Activated T-helper 1 cell treated with anti-CD3 and anti-CD28 coated beads, Interleukin-12 subunit alpha, Interleukin-12 subunit beta, Interleukin-2, Interleukin-4 antibody, amounts not matched to agents 30 ng/mL and 10 ng/mL and 1 ng/mL, durations not matched to agents 14 hours and 24 hours and 36 hours (primary cell): ENCODE measurements at regions of chr19 and their contacts with region 1.

Region 1: GRCh38 chr19:57435062-57435978 is at the start of gene ZNF749:
- DNase-seq: peak; percentile 95
- H3K4me3 Mint-ChIP-seq: peak within 1 kb of the TSS; percentile 93
- H3K27ac Mint-ChIP-seq: peak within 1 kb of the TSS; percentile 95
- H3K4me1 Mint-ChIP-seq: peaks cover 23% of the 10 kb centered on the region
- H3K27me3 Mint-ChIP-seq: no peaks in the 10 kb centered on the region
- total RNA-seq, gene ZNF749: 21.5 and 22.0 TPM in 2 replicates

Region 2: GRCh38 chr19:57096685-57097361 is 338.5 kb before region 1 on chr19:
- intact Hi-C with region 1: no loop called
- DNase-seq: no peak
- H3K4me3 Mint-ChIP-seq: no peak overlapping the region
- H3K27ac Mint-ChIP-seq: no peak overlapping the region
- H3K4me1 Mint-ChIP-seq: no peaks in the 10 kb centered on the region
- H3K27me3 Mint-ChIP-seq: no peaks in the 10 kb centered on the region

Region 3: DNA sequence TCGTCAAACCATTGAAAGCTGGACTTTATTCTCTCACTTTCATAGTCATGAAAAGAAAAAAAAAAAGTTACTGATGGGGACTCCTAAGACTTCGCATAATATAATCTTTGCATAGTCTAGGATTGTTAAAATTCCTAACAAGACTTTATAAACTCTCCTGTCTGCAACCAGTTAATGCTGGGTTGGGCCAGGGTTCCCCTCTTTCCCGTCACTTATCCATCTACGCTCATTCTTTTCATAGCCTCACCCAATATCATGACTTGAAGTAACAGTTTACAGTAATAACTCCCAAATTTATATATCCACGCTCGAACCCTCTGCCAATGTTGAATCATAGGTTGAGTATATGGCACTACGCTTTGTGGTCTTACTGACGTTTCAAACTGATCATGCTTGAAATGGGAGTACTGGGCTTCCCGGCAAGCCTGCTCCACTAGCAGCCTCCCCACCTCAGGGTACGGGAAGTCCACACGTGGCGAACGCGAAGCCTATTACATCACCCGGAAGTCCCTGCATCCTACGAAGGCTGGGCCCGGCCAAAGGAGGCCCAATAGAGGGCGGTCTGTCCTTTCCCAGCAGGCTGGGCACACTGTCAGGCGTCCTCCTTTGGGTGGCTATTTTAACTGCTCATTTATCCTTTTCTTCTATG is 155.8 kb before region 1 on chr19:
- intact Hi-C with region 1: loop called (anchors 1 kb)
- DNase-seq: peak; percentile 75
- H3K4me3 Mint-ChIP-seq: no peak overlapping the region
- H3K27ac Mint-ChIP-seq: no peak overlapping the region
- H3K4me1 Mint-ChIP-seq: peaks cover 23% of the 10 kb centered on the region
- H3K27me3 Mint-ChIP-seq: peaks cover 2% of the 10 kb centered on the region

Region 4: DNA sequence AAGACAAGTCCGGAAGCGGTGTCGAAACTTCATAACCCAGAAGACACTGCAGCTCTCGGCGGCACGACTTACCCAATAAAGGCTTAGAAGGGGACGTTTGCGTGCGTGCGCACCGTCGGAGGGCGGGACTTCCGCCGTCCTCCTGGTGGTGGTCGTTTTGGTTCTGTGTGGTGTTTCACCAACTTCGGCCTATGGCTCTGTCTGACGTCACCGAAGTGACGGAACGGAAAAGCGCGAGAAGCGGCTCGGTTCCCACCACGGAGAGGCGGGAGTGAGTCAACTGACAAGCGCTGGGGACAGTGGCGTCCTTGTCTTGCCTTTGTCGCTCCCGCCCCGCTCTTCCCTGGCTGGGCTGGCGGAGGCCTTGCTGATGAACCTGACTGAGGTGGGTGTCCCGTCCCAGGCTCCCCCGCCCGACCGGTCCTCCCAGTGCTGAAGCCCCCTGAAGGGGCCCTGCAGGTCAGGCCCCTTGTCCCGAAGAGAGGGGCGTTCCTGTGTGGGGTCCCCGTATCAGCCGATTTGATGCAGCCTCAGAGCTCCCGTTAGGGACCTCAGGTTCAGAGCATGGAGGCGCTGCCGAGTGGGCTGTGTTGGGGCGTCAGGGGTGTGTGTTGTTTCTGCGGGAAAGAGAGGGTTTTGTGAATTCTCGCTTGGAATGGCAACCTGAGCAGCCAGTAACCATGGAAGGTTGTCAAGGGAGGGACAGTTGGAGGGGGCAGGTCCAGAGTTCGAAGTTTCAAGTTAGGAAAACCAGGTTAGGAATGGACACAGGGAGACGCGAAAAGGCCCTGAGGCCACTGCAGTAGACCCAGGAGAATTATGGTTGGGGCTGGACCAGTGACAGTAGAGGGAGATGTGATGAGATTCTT is 45.4 kb before region 1 on chr19 and contains the start of gene ZNF548:
- intact Hi-C with region 1: loop called (anchors 1 kb)
- DNase-seq: peak; percentile 92
- H3K4me3 Mint-ChIP-seq: peak within 1 kb of the TSS; percentile 94
- H3K27ac Mint-ChIP-seq: peak within 1 kb of the TSS; percentile 94
- H3K4me1 Mint-ChIP-seq: peaks cover 30% of the 10 kb centered on the region
- H3K27me3 Mint-ChIP-seq: no peaks in the 10 kb centered on the region
- total RNA-seq, gene ZNF548: 11.3 and 12.1 TPM in 2 replicates

Region 5: DNA sequence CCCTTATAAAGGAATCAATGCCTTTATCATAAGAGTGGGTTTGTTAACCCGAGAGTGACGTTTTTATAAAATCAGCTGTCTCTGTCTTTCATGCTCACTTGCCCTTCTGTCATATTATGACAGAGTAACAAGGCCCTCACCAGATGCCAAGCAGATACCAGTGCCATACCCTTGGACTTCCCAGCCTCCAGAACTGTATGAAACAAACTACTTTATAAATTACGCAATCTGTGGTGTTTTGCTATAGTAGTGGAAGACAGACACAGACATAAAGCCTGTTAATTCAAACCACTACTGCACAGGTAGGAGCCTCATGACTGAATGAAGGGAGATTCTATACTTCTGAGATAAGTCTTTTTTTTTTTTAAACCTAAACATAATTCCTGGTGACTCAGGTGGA is 17.0 kb after region 1 on chr19:
- intact Hi-C with region 1: no loop called
- DNase-seq: no peak
- H3K4me3 Mint-ChIP-seq: no peak overlapping the region
- H3K27ac Mint-ChIP-seq: no peak overlapping the region
- H3K4me1 Mint-ChIP-seq: no peaks in the 10 kb centered on the region
- H3K27me3 Mint-ChIP-seq: no peaks in the 10 kb centered on the region

Region 6: DNA sequence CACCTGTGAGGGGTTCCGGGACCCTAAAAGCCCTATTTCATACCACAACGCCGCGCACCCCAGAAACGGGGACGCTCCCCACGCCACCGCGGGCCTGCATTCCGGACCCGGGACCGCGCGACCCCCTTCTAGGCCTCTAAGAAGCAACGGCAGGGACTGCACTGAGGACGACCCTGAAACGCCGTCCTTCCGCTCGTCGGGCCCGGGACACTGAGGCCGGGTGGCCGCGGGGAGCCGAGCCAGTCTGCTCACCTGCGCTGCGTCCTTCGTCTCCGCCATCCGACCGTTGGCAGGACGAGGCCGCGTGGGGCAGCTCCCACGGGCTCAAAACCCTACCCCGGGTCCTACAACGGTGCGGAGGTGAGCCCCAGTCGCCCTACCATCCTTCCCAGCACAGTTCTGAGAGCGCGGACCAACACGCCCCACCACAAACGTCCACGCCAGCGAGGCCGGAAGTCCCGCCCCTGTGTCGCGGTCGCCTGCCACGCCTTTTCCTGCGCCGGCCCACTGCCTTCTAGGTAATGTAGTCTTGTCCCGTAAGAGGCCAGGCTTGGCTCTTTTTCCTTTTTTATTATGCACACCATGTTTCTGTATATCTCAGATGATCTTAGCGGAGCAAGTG is 124.2 kb after region 1 on chr19 and contains the start of gene ZNF550:
- intact Hi-C with region 1: loop called (anchors 1 kb)
- DNase-seq: peak; percentile 84
- H3K4me3 Mint-ChIP-seq: peak within 1 kb of the TSS; percentile 98
- H3K27ac Mint-ChIP-seq: peak within 1 kb of the TSS; percentile 88
- H3K4me1 Mint-ChIP-seq: peaks cover 28% of the 10 kb centered on the region
- H3K27me3 Mint-ChIP-seq: no peaks in the 10 kb centered on the region
- total RNA-seq, gene ZNF550: 7.2 and 7.5 TPM in 2 replicates

Region 7: DNA sequence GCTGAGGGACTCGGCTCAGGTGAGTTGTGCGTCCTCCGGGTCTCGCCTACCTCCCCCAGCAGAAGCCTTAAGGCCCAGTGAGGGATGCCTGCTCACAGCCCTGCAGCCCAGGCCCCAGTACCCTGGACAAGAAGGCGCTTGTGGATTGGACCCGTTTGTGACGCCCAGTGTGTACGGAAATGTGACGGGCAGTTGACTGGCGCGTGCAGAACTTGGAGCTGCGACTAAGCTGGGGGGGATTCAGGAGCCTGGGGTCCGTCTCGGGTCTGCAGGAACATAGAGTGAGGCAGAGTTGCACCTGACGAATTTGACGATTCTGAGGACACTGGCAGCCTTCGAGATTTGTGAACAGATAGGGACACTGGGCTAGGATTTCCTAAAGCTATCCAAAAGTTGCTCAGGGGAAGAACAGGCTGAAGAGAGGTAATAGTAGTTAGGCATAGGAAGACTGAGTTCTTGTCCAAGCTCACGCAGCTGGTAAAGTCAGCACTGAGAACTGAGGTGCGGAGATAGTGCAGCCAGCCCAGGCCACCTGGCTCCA is 247.0 kb after region 1 on chr19:
- intact Hi-C with region 1: loop called (anchors 1 kb)
- DNase-seq: no peak
- H3K4me3 Mint-ChIP-seq: peak overlapping the region; percentile 96
- H3K27ac Mint-ChIP-seq: peak overlapping the region; percentile 92
- H3K4me1 Mint-ChIP-seq: peaks cover 22% of the 10 kb centered on the region
- H3K27me3 Mint-ChIP-seq: no peaks in the 10 kb centered on the region

Region 8: DNA sequence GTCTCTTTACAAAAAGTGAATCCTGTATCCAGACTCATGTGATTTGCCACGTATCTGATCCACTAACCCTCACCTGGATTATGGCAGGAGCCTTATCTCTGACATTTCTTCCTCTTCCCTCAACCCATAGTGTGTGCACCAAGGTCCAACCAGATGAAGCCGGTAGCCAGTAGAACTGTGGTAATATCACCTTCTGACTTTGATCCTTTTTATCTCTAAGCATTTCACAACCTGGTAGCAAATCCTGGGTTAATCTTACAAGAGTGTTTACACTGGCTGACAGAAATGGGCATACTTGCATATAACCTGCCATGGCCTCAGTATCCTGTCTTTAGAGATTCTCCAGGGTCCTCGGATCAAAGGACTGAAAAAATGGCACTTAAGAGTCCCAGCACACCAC is 479.2 kb after region 1 on chr19:
- intact Hi-C with region 1: loop called (anchors 1 kb)
- DNase-seq: no peak
- H3K4me3 Mint-ChIP-seq: peak overlapping the region; percentile 91
- H3K27ac Mint-ChIP-seq: no peak overlapping the region
- H3K4me1 Mint-ChIP-seq: peaks cover 15% of the 10 kb centered on the region
- H3K27me3 Mint-ChIP-seq: no peaks in the 10 kb centered on the region

Region 9: GRCh38 chr19:58475714-58476497 is 1040.6 kb after region 1 on chr19 and contains the start of gene ZNF446:
- intact Hi-C with region 1: loop called (anchors 1 kb)
- DNase-seq: peak; percentile 95
- H3K4me3 Mint-ChIP-seq: peak within 1 kb of the TSS; percentile 88
- H3K27ac Mint-ChIP-seq: peak within 1 kb of the TSS; percentile 99
- H3K4me1 Mint-ChIP-seq: peaks cover 25% of the 10 kb centered on the region
- H3K27me3 Mint-ChIP-seq: no peaks in the 10 kb centered on the region
- total RNA-seq, gene ZNF446: 6.6 and 6.7 TPM in 2 replicates